Endothelial cell of umbilical vein (primary cell): ENCODE measurements at regions of chr2 and their contacts with region 1.

Region 1: DNA sequence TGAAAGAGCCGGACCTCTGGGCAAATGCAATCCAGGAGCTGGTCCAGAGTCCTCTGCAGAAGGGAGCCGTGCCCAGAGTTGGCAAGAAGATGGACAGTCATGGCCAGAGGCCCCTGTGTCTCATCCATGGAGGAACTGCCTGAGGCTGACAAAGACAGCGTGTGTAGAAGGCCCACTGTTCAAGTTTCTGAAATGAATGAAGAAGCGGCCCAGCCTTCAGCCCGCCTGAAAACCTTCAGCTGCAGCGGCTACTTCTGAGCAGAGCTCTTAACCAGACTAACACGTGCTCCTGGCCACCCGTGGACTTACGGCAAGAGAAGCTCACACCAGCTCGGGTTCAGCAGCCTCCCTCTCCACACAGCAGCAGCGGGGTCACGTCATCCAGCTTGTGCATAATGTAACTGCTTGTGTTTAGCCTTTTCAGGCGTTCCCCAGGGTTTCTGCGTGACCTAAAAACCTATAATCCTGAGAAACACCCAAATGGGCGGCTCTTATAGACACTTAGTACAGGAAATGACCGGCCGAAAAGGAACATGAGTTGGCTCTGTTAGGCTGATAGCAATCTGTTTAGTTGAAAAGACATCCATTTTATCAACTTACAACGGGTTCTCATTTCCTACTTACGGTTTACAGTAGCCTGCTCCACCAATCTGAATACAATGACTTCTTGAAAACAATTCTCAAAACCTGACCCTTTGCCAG is at the start of gene FAM124B:
- DNase-seq: peak; percentile 99
- H3K4me3 ChIP-seq: peak within 1 kb of the TSS; percentile 33 to 90 (median 75)
- H3K27ac ChIP-seq: peak within 1 kb of the TSS; percentile 98
- H3K4me1 ChIP-seq: peaks cover 28% of the 10 kb centered on the region
- H3K27me3 ChIP-seq: no peaks in the 10 kb centered on the region
- CTCF ChIP-seq: no peak
- POLR2A ChIP-seq: peak; percentile 96
- total RNA-seq, gene FAM124B: 81.4 and 82.0 TPM in 2 replicates

Region 2: DNA sequence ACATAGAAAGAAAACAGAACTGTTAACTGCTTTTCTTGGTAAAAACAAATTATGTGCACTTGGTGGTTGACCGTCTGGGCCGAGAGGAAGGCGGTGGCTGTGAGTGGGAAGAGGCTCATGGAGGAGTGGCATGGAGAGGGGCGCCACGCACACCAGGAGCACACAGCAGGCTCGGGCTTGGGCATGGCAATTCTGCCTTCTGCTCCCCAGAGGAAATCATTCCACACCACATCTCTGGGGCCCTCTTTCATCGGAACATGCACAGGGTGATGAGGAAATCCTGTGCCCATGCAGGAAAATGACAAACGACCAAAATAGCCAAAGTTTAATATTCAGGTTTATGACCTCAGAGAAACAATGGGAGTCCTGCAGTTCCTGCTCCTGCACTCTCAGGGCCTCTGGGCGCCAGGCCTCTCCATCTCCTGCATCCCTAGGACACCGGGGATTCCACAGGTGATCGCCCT is 483.1 kb before region 1 on chr2:
- CTCF ChIA-PET with region 1: no interaction called
- POLR2A ChIA-PET with region 1: no interaction called
- dilution Hi-C with region 1: no loop called
- intact Hi-C with region 1: loop called (anchors 2 kb)
- DNase-seq: peak; percentile 82
- H3K4me3 ChIP-seq: no peak overlapping the region
- H3K27ac ChIP-seq: peak overlapping the region; percentile 67
- H3K4me1 ChIP-seq: peaks cover 55% of the 10 kb centered on the region
- H3K27me3 ChIP-seq: no peaks in the 10 kb centered on the region
- CTCF ChIP-seq: no peak
- POLR2A ChIP-seq: no peak

Region 3: GRCh38 chr2:223929571-223930102 is 472.2 kb before region 1 on chr2:
- CTCF ChIA-PET with region 1: no interaction called
- POLR2A ChIA-PET with region 1: no interaction called
- dilution Hi-C with region 1: no loop called
- intact Hi-C with region 1: no loop called
- DNase-seq: no peak
- H3K4me3 ChIP-seq: no peak overlapping the region
- H3K27ac ChIP-seq: no peak overlapping the region
- H3K4me1 ChIP-seq: peaks cover 12% of the 10 kb centered on the region
- H3K27me3 ChIP-seq: no peaks in the 10 kb centered on the region
- CTCF ChIP-seq: no peak
- POLR2A ChIP-seq: no peak

Region 4: GRCh38 chr2:224357098-224357901 is 44.5 kb before region 1 on chr2:
- CTCF ChIA-PET with region 1: interaction called, 10 read pairs
- POLR2A ChIA-PET with region 1: no interaction called
- dilution Hi-C with region 1: no loop called
- intact Hi-C with region 1: no loop called
- DNase-seq: peak; percentile 82
- H3K4me3 ChIP-seq: no peak overlapping the region
- H3K27ac ChIP-seq: no peak overlapping the region
- H3K4me1 ChIP-seq: no peaks in the 10 kb centered on the region
- H3K27me3 ChIP-seq: peaks cover 0 to 3% of the 10 kb centered on the region in 2 experiments
- CTCF ChIP-seq: peak; percentile 44 to 68
- POLR2A ChIP-seq: no peak

Region 5: DNA sequence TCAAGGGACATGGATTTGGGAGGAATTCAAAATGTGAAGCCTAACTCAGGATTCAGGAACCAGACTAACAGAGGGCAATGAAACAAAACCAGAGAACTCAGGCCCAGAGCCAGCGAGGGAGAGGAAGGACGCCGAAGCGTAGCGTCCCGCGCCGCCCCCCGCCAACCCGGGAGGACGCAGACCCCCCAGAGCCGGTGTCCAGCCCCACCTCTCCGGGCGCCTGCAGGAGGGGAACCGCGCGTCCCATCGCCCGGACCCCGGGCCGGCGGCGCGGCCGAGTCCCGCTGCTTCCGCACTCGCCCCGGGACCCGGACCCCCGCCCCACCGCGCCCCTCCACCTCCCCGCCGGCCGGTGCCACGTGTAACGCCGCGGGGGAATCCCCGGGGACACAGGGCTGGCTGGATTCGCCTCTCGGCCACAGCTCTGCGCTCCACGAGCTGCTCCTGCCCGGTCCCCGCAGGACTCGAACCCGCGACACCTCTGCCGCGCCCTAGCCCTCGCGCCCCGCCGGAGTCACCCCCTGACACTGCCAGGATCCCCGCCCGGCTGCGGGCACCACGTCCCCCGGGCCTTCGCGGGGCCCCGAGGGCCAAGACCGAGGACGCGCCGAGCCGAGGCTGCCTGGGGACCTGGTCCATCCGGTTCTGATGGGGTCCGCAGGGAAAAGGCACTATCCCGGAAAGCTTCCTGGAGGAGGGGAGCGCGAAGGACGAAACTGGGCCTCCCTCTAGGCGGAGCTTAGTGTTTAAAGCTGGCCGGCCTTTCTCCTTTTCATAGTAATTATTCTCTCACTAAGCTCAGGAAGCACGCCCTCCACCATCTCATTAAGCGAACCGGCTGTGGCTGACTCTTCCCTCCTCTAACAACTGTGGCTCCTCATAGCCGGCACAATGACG is 40.5 kb after region 1 on chr2:
- CTCF ChIA-PET with region 1: interaction called, 10 read pairs
- POLR2A ChIA-PET with region 1: interaction called, 11 read pairs
- dilution Hi-C with region 1: no loop called
- intact Hi-C with region 1: loop called (anchors 1 kb)
- DNase-seq: peak; percentile 61
- H3K4me3 ChIP-seq: peak overlapping the region; percentile 44 to 86 (median 69)
- H3K27ac ChIP-seq: peak overlapping the region; percentile 62
- H3K4me1 ChIP-seq: peaks cover 17% of the 10 kb centered on the region
- H3K27me3 ChIP-seq: no peaks in the 10 kb centered on the region
- CTCF ChIP-seq: no peak
- POLR2A ChIP-seq: peak; percentile 24

Region 6: DNA sequence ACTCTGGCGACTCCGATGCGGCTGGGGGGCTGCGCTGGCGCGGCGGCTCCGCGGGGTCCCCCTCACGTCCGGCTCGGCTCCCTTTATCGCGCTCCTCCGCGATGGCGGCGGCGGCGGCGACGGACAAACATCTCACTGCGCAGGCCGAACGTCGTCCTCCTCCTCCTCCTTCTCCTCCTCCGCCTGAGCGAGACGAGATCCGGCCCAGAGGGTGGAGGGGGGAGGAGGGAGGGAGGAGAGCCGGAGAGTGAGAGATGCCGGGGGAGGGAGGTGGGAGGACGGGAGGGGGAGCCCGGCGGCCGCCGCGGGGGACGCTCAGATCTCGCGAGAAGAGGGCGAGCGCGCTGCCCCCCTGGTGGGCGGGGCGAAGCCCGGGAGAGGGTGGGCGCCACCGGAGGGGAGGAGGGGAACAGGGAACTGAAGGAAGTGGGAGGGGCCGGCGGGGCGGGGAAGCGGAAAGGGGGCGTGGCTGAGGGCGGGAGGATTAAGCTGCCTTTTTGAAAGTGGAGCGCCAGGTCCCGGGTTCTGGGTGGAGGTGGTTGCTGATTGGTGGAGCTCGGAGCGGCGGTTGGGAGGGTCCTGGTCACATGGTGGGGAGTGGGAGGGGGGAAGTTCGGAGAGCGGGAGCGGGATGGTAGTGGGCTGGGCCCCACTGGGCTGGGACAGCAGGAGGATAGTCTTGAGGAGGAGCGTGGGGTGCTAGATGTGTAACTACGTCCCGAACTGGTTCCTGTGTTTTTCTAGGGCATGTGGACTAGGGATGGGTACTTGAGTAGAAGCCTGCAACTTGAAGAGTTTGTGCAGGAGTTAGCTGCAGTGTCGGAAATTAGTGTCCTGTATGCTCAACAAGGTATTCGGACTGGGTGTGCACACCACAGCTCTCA is 183.7 kb after region 1 on chr2 and contains the start of gene CUL3:
- CTCF ChIA-PET with region 1: interaction called, 5 read pairs
- POLR2A ChIA-PET with region 1: interaction called, 6 read pairs
- dilution Hi-C with region 1: no loop called
- intact Hi-C with region 1: loop called (anchors 1 kb)
- DNase-seq: peak; percentile 98
- H3K4me3 ChIP-seq: peak within 1 kb of the TSS; percentile 69 to 96 (median 85)
- H3K27ac ChIP-seq: peak within 1 kb of the TSS; percentile 74
- H3K4me1 ChIP-seq: peaks cover 18% of the 10 kb centered on the region
- H3K27me3 ChIP-seq: no peaks in the 10 kb centered on the region
- CTCF ChIP-seq: no peak
- POLR2A ChIP-seq: peak; percentile 62
- total RNA-seq, gene CUL3: 82.3 and 87.1 TPM in 2 replicates

Region 7: DNA sequence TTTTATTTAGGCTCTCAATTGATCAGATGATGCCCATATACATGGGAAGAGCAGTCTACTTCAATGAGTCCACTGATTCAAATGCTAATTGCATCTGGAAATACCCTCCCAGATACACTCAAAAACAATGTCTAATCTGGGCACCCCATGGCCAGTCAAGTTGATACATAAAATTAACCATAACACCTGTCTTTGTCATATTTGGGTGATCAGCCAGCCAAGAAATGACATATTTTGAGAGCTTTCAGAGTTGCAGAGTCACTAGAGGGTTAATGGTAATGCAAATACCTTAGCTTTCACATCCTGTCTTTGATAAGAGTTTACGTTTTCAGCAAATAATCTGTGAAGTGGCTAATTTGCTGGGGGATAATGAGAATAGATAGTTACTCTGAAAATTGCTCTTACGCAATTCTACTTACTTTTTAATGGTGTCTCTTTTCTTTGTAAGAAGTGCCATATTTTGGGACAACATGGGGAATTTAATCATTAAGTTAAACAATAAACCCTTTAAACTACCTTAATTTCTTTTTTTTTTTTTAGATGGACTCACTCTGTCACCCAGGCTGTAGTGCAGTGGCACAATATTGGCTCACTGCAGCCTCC is 265.3 kb after region 1 on chr2:
- CTCF ChIA-PET with region 1: no interaction called
- POLR2A ChIA-PET with region 1: no interaction called
- dilution Hi-C with region 1: no loop called
- intact Hi-C with region 1: no loop called
- DNase-seq: no peak
- H3K4me3 ChIP-seq: no peak overlapping the region
- H3K27ac ChIP-seq: no peak overlapping the region
- H3K4me1 ChIP-seq: no peaks in the 10 kb centered on the region
- H3K27me3 ChIP-seq: no peaks in the 10 kb centered on the region
- CTCF ChIP-seq: no peak
- POLR2A ChIP-seq: no peak